ENCODE measurements at regions of chr1 and their contacts with region 1.

Region 1: GRCh38 chr1:240169188-240169587 is 77.5 kb downstream of the FMN2 start:
- H3K4me3 ChIP-seq: no peak overlapping the region
- H3K27ac ChIP-seq: no peak overlapping the region
- H3K4me1 ChIP-seq: peaks cover 5% of the 10 kb centered on the region; the same call in 1 of the 2 replicates
- CTCF ChIP-seq: peak; percentile 39; the same call in 1 of the 2 replicates

Region 2: GRCh38 chr1:240155605-240156004 is 13.6 kb before region 1 on chr1:
- CTCF ChIA-PET with region 1: interaction called, 56 read pairs
- POLR2A ChIA-PET with region 1: no interaction called
- H3K4me3 ChIP-seq: no peak overlapping the region
- H3K27ac ChIP-seq: no peak overlapping the region
- H3K4me1 ChIP-seq: no peaks in the 10 kb centered on the region
- CTCF ChIP-seq: no peak